Right cardiac atrium (tissue), 5 donors: ENCODE measurements at regions of chr11 and their contacts with region 1.

Region 1: DNA sequence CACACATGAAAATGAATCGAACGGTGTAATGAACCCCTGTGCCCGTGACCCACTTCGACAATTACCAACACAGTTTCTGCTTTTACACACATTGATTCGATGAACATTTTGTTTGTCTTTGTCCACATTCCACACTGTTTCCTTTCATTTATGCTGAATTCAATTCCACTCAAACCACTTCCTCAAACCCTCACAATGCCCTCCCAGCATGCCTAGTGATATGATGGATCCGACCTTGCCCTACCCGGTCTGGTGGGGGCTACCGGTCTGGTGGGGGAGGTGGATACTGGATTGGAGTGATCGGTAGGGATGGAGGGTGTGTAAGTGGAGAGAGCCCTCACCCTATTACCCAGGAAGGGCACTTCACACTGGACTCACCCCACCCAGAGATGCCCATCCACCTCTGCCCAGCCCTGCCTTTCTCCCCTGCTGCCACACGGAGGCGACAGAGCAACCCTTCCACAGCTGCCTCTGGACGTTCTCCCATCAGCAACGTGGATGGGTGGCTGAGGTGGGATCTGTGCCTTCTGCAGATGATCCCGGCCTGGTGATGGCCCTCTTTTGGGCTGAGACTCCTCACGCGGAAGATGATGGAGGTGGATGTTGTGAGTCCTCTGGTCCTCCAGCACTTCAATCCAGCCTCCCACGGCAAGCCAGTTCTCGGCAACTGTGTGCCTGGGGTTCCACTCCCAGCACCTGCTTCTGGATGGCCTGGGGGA is 33.0 kb upstream of the P2RY2 start:
- DNase-seq: peak; percentile 66 to 87 (median 86)
- ATAC-seq: peak; percentile 50 to 69
- H3K4me3 ChIP-seq: no peak overlapping the region
- H3K27ac ChIP-seq: no peak overlapping the region
- H3K4me1 ChIP-seq: peaks cover 7% of the 10 kb centered on the region
- H3K27me3 ChIP-seq: no peaks in the 10 kb centered on the region

Region 2: DNA sequence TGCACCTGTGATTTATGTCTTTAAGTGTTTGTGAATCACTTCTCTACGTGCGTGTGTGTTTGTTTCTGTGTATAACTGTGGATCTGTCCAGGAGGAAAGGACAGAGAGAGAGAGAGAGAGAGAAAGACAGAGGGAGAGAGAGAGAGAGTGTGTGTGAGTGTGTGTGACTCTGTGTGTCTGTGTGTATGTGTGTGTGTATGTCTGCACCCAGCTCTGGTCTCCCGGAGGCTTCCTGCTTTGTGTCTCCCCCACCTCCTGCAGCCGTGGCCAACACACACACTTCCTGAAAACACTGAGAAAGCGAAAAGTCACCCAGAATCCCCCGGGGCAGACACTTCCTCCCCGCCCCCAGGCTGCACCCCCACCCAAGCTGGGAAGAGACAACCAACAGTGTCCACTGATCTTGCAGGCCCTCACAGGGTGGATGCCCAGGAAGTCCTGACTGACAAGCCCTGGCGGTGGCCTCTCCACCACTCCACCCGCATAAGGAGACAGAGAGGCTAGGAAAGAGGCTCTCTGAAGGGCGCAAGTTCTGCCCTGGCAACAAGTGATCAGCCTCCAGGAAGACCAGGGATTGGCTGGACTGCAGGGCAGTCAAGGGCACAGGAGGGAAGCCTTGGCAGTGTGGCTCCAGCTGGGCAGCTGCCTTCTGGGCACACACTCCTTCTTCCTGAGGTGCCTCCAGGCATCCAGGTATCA is 462.9 kb before region 1 on chr11:
- intact Hi-C with region 1: loop called in 1 of 4 experiments (anchors 10 kb)
- DNase-seq: peak; percentile 89 to 95 (median 94)
- ATAC-seq: peak; percentile 85 to 88
- H3K4me3 ChIP-seq: peak overlapping the region; percentile 53
- H3K27ac ChIP-seq: peak overlapping the region; percentile 99
- H3K4me1 ChIP-seq: peaks cover 20% of the 10 kb centered on the region
- H3K27me3 ChIP-seq: no peaks in the 10 kb centered on the region

Region 3: DNA sequence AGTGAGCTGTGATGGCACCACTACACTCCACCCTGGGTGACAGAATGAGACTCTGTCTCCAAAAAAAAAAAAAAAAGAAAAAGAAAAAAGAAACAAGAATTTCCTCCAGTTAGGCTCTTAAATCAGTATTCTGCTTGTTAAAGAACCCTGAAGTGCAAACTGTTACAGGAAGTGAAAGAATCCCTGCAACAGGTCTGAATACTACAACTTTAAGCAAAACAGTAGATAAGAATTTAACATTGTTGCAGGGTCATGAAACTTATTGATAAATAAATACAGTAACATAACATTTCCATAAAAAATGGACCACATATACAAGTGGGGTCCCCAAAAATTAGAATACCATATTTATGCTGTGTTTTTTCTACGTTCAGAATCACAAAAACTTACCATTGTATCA is 78.8 kb before region 1 on chr11:
- intact Hi-C with region 1: no loop called
- DNase-seq: no peak
- ATAC-seq: no peak
- H3K4me3 ChIP-seq: no peak overlapping the region
- H3K27ac ChIP-seq: no peak overlapping the region
- H3K4me1 ChIP-seq: no peaks in the 10 kb centered on the region
- H3K27me3 ChIP-seq: no peaks in the 10 kb centered on the region

Region 4: DNA sequence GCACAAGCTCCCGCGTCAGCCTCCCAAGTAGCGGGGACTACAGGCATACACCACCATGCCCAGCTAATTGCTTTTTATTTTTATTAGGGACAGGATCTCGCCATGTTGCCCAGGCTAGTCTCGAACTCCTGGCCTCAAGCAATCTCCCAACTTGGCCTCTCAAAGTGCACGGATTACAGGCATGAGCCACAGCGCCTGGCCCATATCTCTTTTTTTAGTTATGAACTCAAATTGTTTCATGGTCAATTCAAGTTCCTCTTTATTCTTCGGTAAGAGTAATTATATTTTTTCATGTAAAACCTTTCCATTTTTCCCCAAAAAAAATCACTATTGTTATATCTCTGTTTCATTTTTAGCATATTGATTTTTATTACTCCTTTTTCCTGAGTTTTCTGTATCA is 68.5 kb before region 1 on chr11:
- intact Hi-C with region 1: no loop called
- DNase-seq: no peak
- ATAC-seq: no peak
- H3K4me3 ChIP-seq: no peak overlapping the region
- H3K27ac ChIP-seq: no peak overlapping the region
- H3K4me1 ChIP-seq: peaks cover 4% of the 10 kb centered on the region
- H3K27me3 ChIP-seq: no peaks in the 10 kb centered on the region

Region 5: DNA sequence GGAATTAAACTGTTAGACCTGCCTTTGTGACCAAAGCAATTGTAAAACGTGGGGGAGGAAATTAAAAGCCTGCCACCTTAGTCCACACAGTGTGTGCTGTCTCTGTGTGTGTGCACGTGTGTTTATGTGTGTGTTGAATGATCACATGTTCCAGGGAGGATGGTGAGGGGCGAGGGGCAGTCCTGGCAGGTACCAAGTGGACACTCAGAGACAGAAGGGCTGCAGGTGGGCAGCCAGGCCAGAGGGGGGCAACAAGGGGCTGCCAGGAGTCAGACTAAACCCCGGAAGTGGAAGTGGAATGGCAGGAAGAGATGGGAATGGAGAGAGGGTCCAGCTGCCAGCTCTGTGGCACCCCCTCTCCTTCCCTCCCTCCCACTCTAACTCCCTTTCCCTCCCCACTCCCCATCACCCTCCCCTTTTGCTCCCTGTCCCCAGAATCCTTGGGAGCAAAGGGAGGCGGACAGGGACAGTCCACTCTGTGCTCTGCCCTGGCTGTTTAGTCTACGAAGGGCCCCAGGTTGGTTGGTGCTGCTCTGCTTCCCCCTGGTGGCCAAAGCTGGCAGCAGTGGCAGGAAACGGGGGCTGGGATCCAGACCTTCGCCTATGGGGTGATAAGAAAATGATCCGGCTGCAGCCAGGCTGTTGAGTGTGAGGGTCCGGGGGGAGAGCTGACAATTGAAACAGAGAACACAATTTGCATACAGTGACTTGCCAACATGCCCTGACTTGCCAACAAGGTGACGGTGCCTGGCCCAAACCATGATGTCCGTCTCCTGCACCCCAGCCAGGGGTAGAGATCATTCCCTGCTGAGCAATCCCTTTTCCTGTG is 57.4 kb after region 1 on chr11:
- intact Hi-C with region 1: loop called (anchors 2 to 5 kb)
- DNase-seq: peak; percentile 81 to 92 (median 91)
- ATAC-seq: peak; percentile 58 to 80
- H3K4me3 ChIP-seq: no peak overlapping the region
- H3K27ac ChIP-seq: no peak overlapping the region
- H3K4me1 ChIP-seq: peaks cover 16% of the 10 kb centered on the region
- H3K27me3 ChIP-seq: no peaks in the 10 kb centered on the region

Region 6: DNA sequence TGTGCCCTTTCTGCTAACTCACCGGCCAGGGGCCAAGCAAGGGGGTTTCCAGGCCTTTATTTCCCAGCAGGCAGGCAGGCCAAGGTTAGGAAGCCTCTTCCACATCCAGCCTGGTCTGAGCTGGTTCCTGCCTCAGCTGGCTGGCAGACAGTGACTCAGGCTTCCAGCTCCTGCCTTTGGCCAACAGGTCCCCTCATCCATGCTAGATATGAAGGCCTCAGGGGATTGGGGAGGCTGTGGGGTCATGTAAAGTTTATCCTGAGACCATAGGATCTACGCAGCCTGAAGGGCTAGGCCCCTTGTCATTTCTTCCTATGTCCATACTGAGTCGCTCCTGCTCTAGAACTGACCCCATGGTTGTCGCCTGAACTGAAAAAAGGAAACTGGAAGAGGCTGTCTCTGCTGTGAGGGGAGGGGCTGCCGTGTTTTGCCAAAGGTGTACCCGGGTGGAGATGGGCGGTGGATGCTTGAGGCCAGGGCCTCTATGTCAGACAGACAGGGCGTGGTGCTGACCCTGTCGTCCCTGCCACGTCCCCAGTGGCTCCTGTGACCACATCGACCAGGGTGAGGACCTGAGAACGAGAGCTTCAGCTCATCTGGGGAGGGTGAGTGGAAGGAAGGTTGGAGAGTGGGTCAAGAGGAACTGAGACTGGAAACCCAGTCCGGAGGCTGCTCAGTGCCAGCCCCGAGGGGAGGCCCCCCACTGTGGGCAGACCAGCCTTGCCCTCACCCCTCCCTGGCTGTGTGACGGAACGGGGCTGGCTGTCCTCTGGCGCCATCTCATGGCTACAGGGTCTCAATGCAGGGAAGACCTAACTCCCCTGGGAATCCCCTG is 104.0 kb after region 1 on chr11:
- intact Hi-C with region 1: loop called in 3 of 4 experiments (anchors 2 to 10 kb)
- DNase-seq: peak; percentile 80 to 90 (median 88)
- ATAC-seq: peak; percentile 71 to 80
- H3K4me3 ChIP-seq: no peak overlapping the region
- H3K27ac ChIP-seq: peak overlapping the region; percentile 51
- H3K4me1 ChIP-seq: peaks cover 9% of the 10 kb centered on the region
- H3K27me3 ChIP-seq: no peaks in the 10 kb centered on the region

Region 7: GRCh38 chr11:73693899-73694525 is 508.9 kb after region 1 on chr11:
- intact Hi-C with region 1: no loop called
- DNase-seq: no peak
- ATAC-seq: no peak
- H3K4me3 ChIP-seq: no peak overlapping the region
- H3K27ac ChIP-seq: no peak overlapping the region
- H3K4me1 ChIP-seq: no peaks in the 10 kb centered on the region
- H3K27me3 ChIP-seq: no peaks in the 10 kb centered on the region